ENCODE measurements at regions of chr12 and their contacts with region 1.

Region 1: GRCh38 chr12:56286044-56286830 is 13.9 kb downstream of the CS start:
- DNase-seq: no peak
- ATAC-seq: no peak
- H3K4me3 ChIP-seq: no peak overlapping the region
- H3K27ac ChIP-seq: peak overlapping the region; percentile 30
- H3K4me1 ChIP-seq: peaks cover 53% of the 10 kb centered on the region
- H3K27me3 ChIP-seq: no peaks in the 10 kb centered on the region
- CTCF ChIP-seq: no peak
- EP300 ChIP-seq: no peak
- POLR2A ChIP-seq: no peak
- RAD21 ChIP-seq: no peak

Region 2: DNA sequence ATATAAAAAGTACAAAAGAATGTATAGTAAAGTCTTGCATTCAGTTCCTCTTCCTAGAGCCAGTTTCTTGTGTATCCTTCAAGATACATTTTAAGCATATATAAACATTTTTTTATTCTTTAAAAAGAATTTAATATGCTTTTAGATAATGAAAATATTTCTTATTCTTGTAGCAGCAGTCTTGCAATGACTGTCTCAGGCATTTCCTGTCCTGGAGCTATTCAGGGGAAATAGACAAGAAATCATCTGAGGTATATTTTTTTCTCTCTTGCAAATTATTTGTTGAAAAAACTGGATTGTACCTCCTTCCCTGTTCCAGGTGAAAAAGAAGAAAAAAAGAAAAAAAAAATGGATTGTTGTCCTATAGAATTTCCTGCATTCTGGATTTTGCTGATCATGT is 223.2 kb before region 1 on chr12:
- CTCF ChIA-PET with region 1: no interaction called
- POLR2A ChIA-PET with region 1: no interaction called
- in situ Hi-C with region 1: no loop called
- intact Hi-C with region 1: no loop called
- DNase-seq: no peak
- ATAC-seq: no peak
- H3K4me3 ChIP-seq: no peak overlapping the region
- H3K27ac ChIP-seq: no peak overlapping the region
- H3K4me1 ChIP-seq: no peaks in the 10 kb centered on the region
- H3K27me3 ChIP-seq: no peaks in the 10 kb centered on the region; a peak in 1 of 5 replicates
- CTCF ChIP-seq: no peak
- EP300 ChIP-seq: no peak
- POLR2A ChIP-seq: no peak
- RAD21 ChIP-seq: no peak

Region 3: DNA sequence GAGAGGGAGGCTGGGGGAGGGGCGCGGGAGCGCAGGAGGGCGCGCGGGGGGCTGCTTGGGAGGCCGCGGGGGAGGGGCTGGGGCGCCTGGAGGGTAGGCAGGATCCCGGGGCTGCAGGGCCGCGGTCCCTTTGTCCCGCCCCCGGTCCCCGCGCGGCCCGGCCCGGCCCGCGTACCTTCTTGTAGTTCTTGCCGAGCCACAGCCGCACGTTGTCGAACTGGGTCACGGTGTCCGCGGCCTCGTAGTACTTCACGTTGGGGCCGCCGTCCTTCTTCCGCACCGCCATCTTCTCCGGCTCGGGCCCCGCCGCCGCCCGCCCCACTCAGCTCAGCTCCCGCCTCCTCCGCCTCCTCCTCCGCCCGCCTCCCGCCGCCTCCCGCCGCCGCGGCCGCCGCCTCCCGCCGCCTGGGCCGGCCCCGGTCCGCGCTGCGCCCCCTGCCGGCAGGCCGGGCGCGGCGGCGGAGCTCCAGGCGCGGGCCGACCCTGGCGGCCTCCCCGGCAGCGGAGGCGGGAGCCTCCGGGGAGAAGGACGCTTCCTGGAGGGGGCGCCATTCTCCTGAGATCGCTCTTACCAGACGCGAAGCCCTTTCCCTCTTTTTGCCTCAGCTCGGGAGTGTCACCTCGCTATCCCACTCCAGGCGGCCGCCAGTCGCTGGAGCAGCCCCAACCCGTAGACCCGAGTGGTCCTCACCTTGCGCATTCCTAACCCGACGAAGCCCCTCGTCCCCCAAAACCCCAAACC is 96.9 kb before region 1 on chr12 and contains the start of gene SMARCC2:
- CTCF ChIA-PET with region 1: no interaction called
- POLR2A ChIA-PET with region 1: no interaction called
- in situ Hi-C with region 1: no loop called
- intact Hi-C with region 1: no loop called
- DNase-seq: peak; percentile 73
- ATAC-seq: peak; percentile 86
- H3K4me3 ChIP-seq: peak within 1 kb of the TSS; percentile 76 to 94 (median 93)
- H3K27ac ChIP-seq: peak within 1 kb of the TSS; percentile 74
- H3K4me1 ChIP-seq: peaks cover 34% of the 10 kb centered on the region
- H3K27me3 ChIP-seq: no peaks in the 10 kb centered on the region; a peak in 1 of 5 replicates
- CTCF ChIP-seq: peak; percentile 81
- EP300 ChIP-seq: no peak
- POLR2A ChIP-seq: peak; percentile 29 to 46; a peak in 2 of 4 replicates
- RAD21 ChIP-seq: peak; percentile 62
- total RNA-seq, gene SMARCC2: 13.1 and 21.3 TPM in 2 replicates

Region 4: GRCh38 chr12:56258057-56258819 is 28.0 kb before region 1 on chr12 and contains the start of gene ANKRD52:
- CTCF ChIA-PET with region 1: no interaction called
- POLR2A ChIA-PET with region 1: no interaction called
- in situ Hi-C with region 1: no loop called
- intact Hi-C with region 1: no loop called
- DNase-seq: peak; percentile 26
- ATAC-seq: peak; percentile 92
- H3K4me3 ChIP-seq: peak within 1 kb of the TSS; percentile 74 to 96 (median 88)
- H3K27ac ChIP-seq: peak within 1 kb of the TSS; percentile 45
- H3K4me1 ChIP-seq: peaks cover 28% of the 10 kb centered on the region
- H3K27me3 ChIP-seq: no peaks in the 10 kb centered on the region
- CTCF ChIP-seq: peak; percentile 61
- EP300 ChIP-seq: no peak
- POLR2A ChIP-seq: peak in 1 of 2 experiments; percentile 47; a peak in 2 of 4 replicates
- RAD21 ChIP-seq: peak; percentile 84
- total RNA-seq, gene ANKRD52: 7.8 and 22.0 TPM in 2 replicates

Region 5: GRCh38 chr12:56299853-56300643 is 13.8 kb after region 1 on chr12 and contains the start of gene CS:
- CTCF ChIA-PET with region 1: no interaction called
- POLR2A ChIA-PET with region 1: interaction called, 12 read pairs
- in situ Hi-C with region 1: no loop called
- intact Hi-C with region 1: no loop called
- DNase-seq: peak; percentile 96
- ATAC-seq: peak; percentile 87
- H3K4me3 ChIP-seq: peak within 1 kb of the TSS; percentile 76 to 97 (median 94)
- H3K27ac ChIP-seq: peak within 1 kb of the TSS; percentile 96
- H3K4me1 ChIP-seq: peaks cover 65% of the 10 kb centered on the region
- H3K27me3 ChIP-seq: no peaks in the 10 kb centered on the region; a peak in 1 of 5 replicates
- CTCF ChIP-seq: 0 out of 2 replicates have a peak, but pooled peaks have one; percentile 7
- EP300 ChIP-seq: 0 out of 4 replicates have a peak, but pooled peaks of 1 of the 2 experiments have one; percentile 26
- POLR2A ChIP-seq: peak; percentile 54 to 70
- RAD21 ChIP-seq: peak; percentile 59
- total RNA-seq, gene CS: 175 and 243 TPM in 2 replicates

Measured in HepG2 (cell line).